Uterus (tissue), 4 donors: ENCODE measurements at regions of chr3 and their contacts with region 1.

Region 1: DNA sequence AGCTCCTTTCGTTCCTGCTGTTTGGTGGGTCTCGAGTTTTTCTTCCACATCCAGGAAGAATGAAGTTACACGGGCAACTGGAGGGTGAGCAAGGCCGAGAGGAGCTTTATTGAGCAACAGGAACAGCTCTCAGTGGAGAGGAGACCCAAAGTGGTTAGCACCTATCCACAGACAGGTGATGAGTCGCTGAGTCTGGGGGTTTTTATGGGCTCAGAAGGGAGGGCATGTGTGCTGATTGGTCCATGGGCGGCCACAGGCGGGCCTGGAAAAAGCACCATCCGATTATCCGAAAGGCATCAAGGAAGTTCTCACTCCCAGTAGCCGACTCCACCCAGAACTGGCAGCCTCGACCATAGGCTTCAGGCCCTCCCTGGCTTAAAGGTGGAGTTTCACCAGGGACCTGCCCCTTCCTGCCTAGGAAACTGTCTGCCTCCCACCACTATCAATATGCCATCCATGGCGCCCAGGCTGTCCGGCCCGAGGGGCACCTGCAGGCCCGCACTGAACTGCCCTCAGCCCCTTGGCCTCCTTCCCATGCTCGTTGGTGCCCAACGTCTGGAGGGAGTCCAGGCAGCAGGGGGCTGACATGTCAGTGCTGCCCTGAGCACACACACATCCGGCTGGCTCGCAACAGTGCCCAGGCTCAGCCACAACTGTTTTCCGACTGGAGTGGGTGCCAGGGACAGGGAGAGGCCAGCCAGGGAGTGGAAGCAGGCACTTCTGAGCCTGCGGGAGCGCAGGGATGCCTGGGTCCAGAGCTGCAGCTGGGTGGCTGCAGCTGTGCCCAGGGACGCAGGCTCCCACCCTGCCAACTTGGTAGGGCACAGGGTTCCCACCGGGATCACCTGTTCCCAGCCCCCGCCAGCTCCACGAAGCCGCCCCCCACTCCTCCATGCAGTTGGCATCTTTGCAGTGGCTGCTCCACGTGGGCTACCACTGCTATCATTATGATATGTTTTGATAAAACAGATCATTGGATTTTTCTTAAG is 170.2 kb downstream of the FNDC3B start:
- DNase-seq: no peak
- H3K4me3 ChIP-seq: no peak overlapping the region
- H3K27ac ChIP-seq: peak overlapping the region; percentile 3 to 36
- H3K4me1 ChIP-seq: peaks cover 0 to 9% of the 10 kb centered on the region in 2 donors
- H3K27me3 ChIP-seq: no peaks in the 10 kb centered on the region
- CTCF ChIP-seq: no peak
- POLR2A ChIP-seq: no peak

Region 2: GRCh38 chr3:172289582-172289981 is 80.0 kb after region 1 on chr3:
- intact Hi-C with region 1: loop called (anchors 10 kb)
- DNase-seq: peak in 1 of 2 donors; percentile 28
- H3K4me3 ChIP-seq: no peak overlapping the region
- H3K27ac ChIP-seq: peak overlapping the region in 1 of 2 donors; percentile 1
- H3K4me1 ChIP-seq: no peaks in the 10 kb centered on the region
- H3K27me3 ChIP-seq: no peaks in the 10 kb centered on the region
- CTCF ChIP-seq: peak; percentile 25 to 45 (median 28)
- POLR2A ChIP-seq: no peak

Region 3: DNA sequence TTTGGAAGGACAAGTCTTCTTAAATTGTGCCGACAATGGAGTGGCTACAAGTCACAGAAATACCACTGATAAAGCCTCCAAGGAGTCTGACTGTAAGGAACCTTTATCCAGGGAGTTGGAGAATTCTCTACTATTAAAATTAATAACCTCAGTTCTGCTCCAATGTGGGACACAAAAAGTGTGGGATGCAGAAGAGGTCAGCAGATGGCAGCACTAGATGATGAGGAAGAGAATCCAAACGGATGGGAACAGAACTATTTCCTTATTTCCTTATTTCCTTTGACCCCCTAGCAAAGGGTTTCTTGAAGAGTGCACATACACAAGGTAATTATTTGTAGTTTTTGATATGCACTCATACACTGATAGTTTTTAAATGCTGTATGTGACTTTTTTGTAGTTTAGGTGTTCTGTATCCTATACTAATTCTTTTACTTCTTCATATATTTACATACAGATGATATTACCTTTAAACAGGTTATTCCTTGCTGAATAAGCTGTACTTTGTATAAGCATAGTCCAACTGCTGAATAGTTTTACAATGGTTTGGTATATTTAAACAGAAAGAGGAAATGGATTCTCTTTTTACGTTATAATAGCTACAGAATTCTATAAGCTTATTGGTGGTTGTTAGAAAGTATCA is 1162.3 kb after region 1 on chr3:
- intact Hi-C with region 1: no loop called
- DNase-seq: peak; percentile 18 to 30
- H3K4me3 ChIP-seq: no peak overlapping the region
- H3K27ac ChIP-seq: no peak overlapping the region
- H3K4me1 ChIP-seq: no peaks in the 10 kb centered on the region
- H3K27me3 ChIP-seq: no peaks in the 10 kb centered on the region
- CTCF ChIP-seq: peak; percentile 48 to 64 (median 52)
- POLR2A ChIP-seq: no peak